ENCODE measurements at regions of chr10 and their contacts with region 1.

Region 1: GRCh38 chr10:24209946-24210491 is 1.1 kb downstream of the KIAA1217 start:
- DNase-seq: no peak

Region 2: GRCh38 chr10:24097751-24098207 is 112.2 kb before region 1 on chr10:
- intact Hi-C with region 1: no loop called
- DNase-seq: no peak

Region 3: DNA sequence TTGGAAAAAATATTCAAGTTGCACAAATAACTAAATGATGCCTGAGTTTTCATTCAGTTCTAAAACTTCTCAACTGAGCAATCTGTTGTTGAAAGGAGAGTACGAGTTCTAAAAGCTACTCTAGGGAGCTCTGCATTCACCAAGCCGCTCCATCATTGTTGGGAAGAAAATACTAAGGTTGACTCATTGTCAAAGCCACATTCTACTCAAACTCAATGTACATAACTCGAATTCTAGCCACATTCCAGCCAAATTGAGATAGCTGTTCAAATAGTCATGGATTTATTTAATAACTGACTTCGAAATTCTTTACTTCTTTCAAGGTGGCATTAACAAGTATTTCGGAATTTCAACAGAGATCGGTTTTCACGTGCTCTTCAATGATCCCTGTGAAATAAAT is 62.4 kb after region 1 on chr10:
- intact Hi-C with region 1: no loop called
- DNase-seq: no peak

Region 4: GRCh38 chr10:24349379-24350001 is 139.5 kb after region 1 on chr10:
- intact Hi-C with region 1: loop called (anchors 10 kb)
- DNase-seq: no peak

Measured in posterior vena cava (tissue), 2 donors.